ENCODE measurements at regions of chr12 and their contacts with region 1.

Region 1: DNA sequence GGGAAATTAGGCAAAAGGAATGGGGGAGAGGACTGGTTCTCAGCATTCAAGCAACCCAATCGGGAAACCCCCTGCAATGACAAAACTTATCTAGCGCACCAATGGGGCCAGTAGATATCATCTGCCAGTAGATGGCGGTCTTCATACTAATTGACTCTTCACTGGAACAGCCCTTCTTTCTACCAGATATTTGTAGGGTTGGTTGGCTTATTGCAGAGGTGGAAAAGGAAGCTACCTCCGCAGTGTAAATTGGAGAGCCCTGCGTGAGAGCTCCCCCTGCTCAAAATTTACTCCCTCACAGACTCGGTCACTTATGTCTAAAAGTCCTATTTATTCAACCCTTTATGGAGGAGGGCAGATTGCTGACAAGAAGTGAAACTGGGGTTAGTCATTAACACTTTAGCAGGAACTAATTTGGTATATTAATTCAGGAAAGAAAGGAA is 166.1 kb upstream of the CCND2 start:
- DNase-seq: peak; percentile 92
- ATAC-seq: peak; percentile 97
- H3K4me3 ChIP-seq: no peak overlapping the region
- H3K4me3 Mint-ChIP-seq: peak overlapping the region; percentile 9
- H3K27ac ChIP-seq: no peak overlapping the region
- H3K27ac Mint-ChIP-seq: peak overlapping the region; percentile 1
- H3K4me1 ChIP-seq: peaks cover 6 to 8% of the 10 kb centered on the region in 2 donors
- H3K4me1 Mint-ChIP-seq: peaks cover 8% of the 10 kb centered on the region
- H3K27me3 ChIP-seq: peaks cover 0 to 6% (median 0%) of the 10 kb centered on the region in 4 experiments
- H3K27me3 Mint-ChIP-seq: peaks cover 7% of the 10 kb centered on the region
- CTCF ChIP-seq: peak; percentile 81

Region 2: DNA sequence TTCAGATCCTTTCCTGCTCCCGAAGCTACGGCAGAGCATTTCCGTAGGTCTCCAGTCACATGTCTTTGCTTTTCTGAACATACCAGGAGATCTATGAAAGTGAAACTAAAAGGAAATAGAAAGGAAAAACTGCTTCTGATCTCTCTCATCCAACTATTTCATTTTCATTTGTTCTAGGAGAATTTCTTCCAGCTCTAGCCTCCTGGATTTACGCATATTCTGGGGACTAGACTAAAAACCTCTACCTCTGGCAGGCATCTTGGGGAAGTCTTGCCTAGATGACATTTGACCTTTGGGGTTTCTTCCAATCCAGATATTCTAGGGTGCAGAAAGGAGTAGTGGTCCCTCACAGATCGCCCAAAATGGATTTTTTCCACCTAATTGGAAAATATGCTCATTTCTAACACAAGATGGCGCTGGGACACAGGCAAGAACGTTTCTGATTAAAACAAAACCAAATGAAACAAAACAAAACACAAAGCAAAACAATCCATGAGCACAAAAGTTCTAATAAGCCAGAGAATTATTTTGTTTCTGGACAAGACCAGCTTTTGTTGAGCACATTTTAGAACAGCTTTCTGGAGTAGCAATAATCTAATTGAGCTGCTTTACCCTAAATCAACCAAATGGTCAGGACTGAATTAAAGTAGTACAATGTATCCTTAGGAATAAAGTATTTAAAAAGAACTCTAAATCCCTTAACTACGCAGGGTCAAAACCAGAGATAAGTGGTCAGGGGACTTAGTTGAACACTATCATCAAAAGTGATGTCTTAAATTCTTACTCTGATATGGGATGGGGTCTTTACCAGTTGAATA is 222.0 kb before region 1 on chr12:
- CTCF ChIA-PET with region 1: interaction called, 16 read pairs
- POLR2A ChIA-PET with region 1: no interaction called
- intact Hi-C with region 1: loop called (anchors 5 kb)
- DNase-seq: peak; percentile 72
- ATAC-seq: no peak
- H3K4me3 ChIP-seq: no peak overlapping the region
- H3K4me3 Mint-ChIP-seq: no peak overlapping the region
- H3K27ac ChIP-seq: no peak overlapping the region
- H3K27ac Mint-ChIP-seq: no peak overlapping the region
- H3K4me1 ChIP-seq: peaks cover 2 to 7% of the 10 kb centered on the region in 2 donors
- H3K4me1 Mint-ChIP-seq: peaks cover 4% of the 10 kb centered on the region
- H3K27me3 ChIP-seq: peaks cover 0 to 13% (median 6%) of the 10 kb centered on the region in 4 experiments
- H3K27me3 Mint-ChIP-seq: peaks cover 8% of the 10 kb centered on the region
- CTCF ChIP-seq: peak; percentile 88

Region 3: DNA sequence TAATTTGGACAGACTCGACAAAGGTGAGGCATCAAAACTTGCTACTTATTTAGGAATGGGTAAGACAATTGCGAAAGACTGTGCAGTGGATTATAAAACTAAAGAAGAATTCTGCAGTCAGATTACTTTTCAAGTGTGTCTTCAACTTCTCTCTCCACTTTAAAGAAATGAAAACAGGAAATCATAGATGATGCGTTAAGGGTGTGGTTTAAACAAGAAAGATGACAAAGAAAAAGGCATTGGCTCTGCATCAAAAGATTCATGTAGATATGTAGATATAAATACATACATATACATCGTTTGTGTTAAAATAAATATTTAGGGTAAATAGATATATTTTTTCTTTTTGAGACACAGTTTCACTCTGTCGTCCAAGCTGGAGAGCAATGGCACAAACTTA is 159.7 kb before region 1 on chr12:
- CTCF ChIA-PET with region 1: no interaction called
- POLR2A ChIA-PET with region 1: no interaction called
- intact Hi-C with region 1: no loop called
- DNase-seq: peak; percentile 22
- ATAC-seq: no peak
- H3K4me3 ChIP-seq: no peak overlapping the region
- H3K4me3 Mint-ChIP-seq: peak overlapping the region; percentile 14
- H3K27ac ChIP-seq: peak overlapping the region; percentile 64 to 67
- H3K27ac Mint-ChIP-seq: peak overlapping the region; percentile 21
- H3K4me1 ChIP-seq: peaks cover 17 to 20% of the 10 kb centered on the region in 2 donors
- H3K4me1 Mint-ChIP-seq: peaks cover 21% of the 10 kb centered on the region
- H3K27me3 ChIP-seq: no peaks in the 10 kb centered on the region
- H3K27me3 Mint-ChIP-seq: peaks cover 4% of the 10 kb centered on the region
- CTCF ChIP-seq: no peak

Region 4: DNA sequence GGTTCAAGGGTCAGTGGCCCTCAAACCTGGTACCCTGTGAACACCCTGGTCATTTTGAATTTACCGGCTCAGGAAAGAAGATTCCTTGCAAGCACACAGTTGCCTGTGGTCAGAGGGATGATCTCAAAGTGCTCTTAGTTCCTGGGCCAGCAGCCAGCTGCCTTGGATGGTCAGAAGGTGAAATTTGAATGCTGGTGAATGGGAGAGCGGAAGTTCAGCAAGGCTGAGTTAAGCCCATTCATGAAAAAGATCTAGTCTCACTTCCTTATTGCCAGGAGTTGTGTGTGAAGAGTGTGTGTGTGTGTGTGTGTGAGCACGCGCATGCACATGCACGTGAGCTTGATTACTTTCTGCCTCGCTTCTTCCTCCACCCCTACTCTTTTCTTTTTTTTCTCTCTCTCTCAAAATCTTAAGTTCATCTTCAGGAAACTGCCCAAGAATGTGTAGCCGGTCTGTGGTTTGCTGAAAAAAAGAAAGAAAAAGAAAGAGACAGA is 10.6 kb after region 1 on chr12:
- CTCF ChIA-PET with region 1: interaction called, 23 read pairs
- POLR2A ChIA-PET with region 1: no interaction called
- intact Hi-C with region 1: loop called (anchors 1 kb)
- DNase-seq: peak; percentile 90
- ATAC-seq: peak; percentile 90
- H3K4me3 ChIP-seq: peak overlapping the region in 3 of 5 experiments; percentile 21 to 56 (median 34)
- H3K4me3 Mint-ChIP-seq: peak overlapping the region; percentile 78
- H3K27ac ChIP-seq: peak overlapping the region; percentile 47 to 59
- H3K27ac Mint-ChIP-seq: peak overlapping the region; percentile 85
- H3K4me1 ChIP-seq: peaks cover 49 to 51% of the 10 kb centered on the region in 2 donors
- H3K4me1 Mint-ChIP-seq: peaks cover 54% of the 10 kb centered on the region
- H3K27me3 ChIP-seq: peaks cover 0 to 1% (median 0%) of the 10 kb centered on the region in 4 experiments
- H3K27me3 Mint-ChIP-seq: no peaks in the 10 kb centered on the region
- CTCF ChIP-seq: no peak

Region 5: DNA sequence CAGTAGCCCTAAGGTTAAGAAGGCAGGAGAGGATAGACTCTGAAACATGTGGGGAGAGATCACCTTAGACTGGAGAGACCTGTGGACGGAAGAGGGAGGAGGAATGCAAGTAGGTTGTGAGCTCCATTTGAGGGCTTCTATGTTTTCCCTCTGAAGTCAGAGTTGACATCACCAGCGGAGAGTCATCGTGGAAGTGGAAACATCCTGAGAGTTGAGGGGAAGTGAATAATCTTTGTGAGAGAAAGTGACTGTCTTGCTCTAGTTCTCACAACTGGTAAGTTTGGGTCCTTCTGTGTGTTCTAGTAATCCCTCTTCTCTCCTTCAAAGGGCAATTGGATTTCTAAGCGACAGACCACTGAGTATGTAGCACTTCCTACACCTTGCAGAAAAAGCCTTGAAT is 62.5 kb after region 1 on chr12:
- CTCF ChIA-PET with region 1: interaction called, 3 read pairs
- POLR2A ChIA-PET with region 1: no interaction called
- intact Hi-C with region 1: loop called (anchors 2 kb)
- DNase-seq: peak; percentile 15
- ATAC-seq: no peak
- H3K4me3 ChIP-seq: no peak overlapping the region
- H3K4me3 Mint-ChIP-seq: no peak overlapping the region
- H3K27ac ChIP-seq: peak overlapping the region; percentile 13 to 26
- H3K27ac Mint-ChIP-seq: no peak overlapping the region
- H3K4me1 ChIP-seq: peaks cover 31% of the 10 kb centered on the region in 2 donors
- H3K4me1 Mint-ChIP-seq: peaks cover 38% of the 10 kb centered on the region
- H3K27me3 ChIP-seq: no peaks in the 10 kb centered on the region
- H3K27me3 Mint-ChIP-seq: no peaks in the 10 kb centered on the region
- CTCF ChIP-seq: no peak

Region 6: GRCh38 chr12:4215229-4216186 is 108.1 kb after region 1 on chr12:
- CTCF ChIA-PET with region 1: interaction called, 10 read pairs
- POLR2A ChIA-PET with region 1: no interaction called
- intact Hi-C with region 1: no loop called
- DNase-seq: peak; percentile 91
- ATAC-seq: peak; percentile 90
- H3K4me3 ChIP-seq: peak overlapping the region; percentile 28 to 53 (median 34)
- H3K4me3 Mint-ChIP-seq: peak overlapping the region; percentile 87
- H3K27ac ChIP-seq: peak overlapping the region; percentile 89 to 94
- H3K27ac Mint-ChIP-seq: peak overlapping the region; percentile 94
- H3K4me1 ChIP-seq: peaks cover 32 to 41% of the 10 kb centered on the region in 2 donors
- H3K4me1 Mint-ChIP-seq: peaks cover 41% of the 10 kb centered on the region
- H3K27me3 ChIP-seq: no peaks in the 10 kb centered on the region
- H3K27me3 Mint-ChIP-seq: no peaks in the 10 kb centered on the region
- CTCF ChIP-seq: no peak

Measured in B cell (primary cell).